Panc1 (cell line): ENCODE measurements at regions of chr7 and their contacts with region 1.

Region 1: GRCh38 chr7:135286876-135287275 is 53.2 kb downstream of the STRA8 start:
- DNase-seq: no peak
- ATAC-seq: no peak
- H3K4me3 ChIP-seq: no peak overlapping the region
- H3K27ac ChIP-seq: no peak overlapping the region
- H3K4me1 ChIP-seq: no peaks in the 10 kb centered on the region
- H3K27me3 ChIP-seq: no peaks in the 10 kb centered on the region
- CTCF ChIP-seq: no peak

Region 2: DNA sequence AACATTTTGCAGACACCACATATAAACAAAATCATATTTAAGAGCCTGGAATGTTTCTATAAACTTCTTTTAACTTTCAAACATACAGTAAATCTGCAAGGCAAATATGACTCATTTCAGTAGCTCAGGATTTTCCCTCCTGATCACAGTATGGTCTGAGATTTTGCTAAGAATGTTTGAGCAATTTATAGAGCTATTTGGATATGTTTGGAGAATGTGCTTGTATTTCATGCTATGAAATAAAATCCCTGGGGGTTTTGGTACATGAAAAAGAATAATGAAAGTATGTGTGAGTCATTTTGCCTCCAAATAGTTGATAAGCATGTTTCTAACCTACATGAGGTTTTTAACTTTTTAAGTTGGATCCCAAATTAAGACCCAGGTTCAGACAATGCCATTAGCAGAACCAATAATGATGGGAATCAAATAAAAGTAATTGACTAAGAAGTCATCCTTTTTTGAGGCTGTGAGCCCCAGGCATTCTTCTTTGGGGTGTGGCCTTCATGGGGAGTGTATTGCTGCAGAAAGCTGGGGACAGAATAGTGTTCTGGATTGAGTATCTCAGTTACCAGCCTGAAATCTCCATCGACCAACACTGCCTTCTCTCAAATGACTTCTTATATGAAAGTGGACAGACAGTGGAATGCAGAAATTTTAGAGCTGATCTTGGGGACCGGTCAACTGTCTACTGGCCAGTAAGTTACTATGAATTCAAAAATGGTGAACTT is 366.7 kb before region 1 on chr7:
- CTCF ChIA-PET with region 1: no interaction called
- POLR2A ChIA-PET with region 1: no interaction called
- in situ Hi-C with region 1: no loop called
- intact Hi-C with region 1: no loop called
- DNase-seq: no peak
- ATAC-seq: peak; percentile 48; the same call in 1 of the 2 replicates
- H3K4me3 ChIP-seq: no peak overlapping the region
- H3K27ac ChIP-seq: no peak overlapping the region
- H3K4me1 ChIP-seq: no peaks in the 10 kb centered on the region
- H3K27me3 ChIP-seq: no peaks in the 10 kb centered on the region
- CTCF ChIP-seq: no peak

Region 3: GRCh38 chr7:135320277-135320676 is 33.4 kb after region 1 on chr7:
- CTCF ChIA-PET with region 1: no interaction called
- POLR2A ChIA-PET with region 1: no interaction called
- in situ Hi-C with region 1: no loop called
- intact Hi-C with region 1: loop called (anchors 5 kb)
- DNase-seq: no peak
- ATAC-seq: peak; percentile 63
- H3K4me3 ChIP-seq: no peak overlapping the region
- H3K27ac ChIP-seq: no peak overlapping the region
- H3K4me1 ChIP-seq: no peaks in the 10 kb centered on the region
- H3K27me3 ChIP-seq: no peaks in the 10 kb centered on the region
- CTCF ChIP-seq: no peak